CD4-positive, alpha-beta memory T cell (primary cell): ENCODE measurements at regions of chr6 and their contacts with region 1.

Region 1: DNA sequence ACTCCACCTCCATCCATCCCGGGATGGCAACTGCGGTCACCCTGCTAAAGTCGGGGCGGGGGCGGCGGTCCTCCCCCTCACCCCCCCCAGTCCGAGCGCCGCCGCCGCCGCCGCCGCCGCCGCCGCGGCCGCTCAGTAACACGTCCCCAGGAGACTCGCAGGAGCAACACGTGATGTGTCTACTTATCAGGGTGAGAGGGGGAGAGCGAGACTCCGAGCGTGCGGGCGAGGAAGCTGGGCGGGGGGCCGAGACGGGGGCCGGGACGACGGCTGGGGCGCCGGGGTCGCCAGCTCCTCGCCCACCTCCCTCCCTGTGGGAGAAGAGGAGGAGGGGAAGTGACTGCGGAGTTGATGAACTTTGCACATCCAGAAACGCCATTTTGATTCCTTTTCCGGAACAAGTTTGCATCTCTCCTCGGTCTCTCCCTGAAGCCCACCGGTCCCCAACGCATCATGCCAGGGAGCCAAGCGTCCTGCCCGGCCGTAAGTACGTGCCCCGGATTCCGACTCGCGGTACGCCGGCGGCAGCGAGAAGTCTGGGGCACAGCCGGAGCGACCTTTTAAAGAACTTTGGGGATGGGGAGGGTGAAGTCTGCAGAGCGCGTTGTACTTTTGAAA is at the start of gene RREB1:
- DNase-seq: peak; percentile 54 to 77 (median 64)
- H3K4me3 ChIP-seq: peak within 1 kb of the TSS; percentile 82 to 99
- H3K4me3 Mint-ChIP-seq: peak within 1 kb of the TSS; percentile 94 to 97 (median 96)
- H3K27ac ChIP-seq: peak within 1 kb of the TSS; percentile 74
- H3K27ac Mint-ChIP-seq: peak within 1 kb of the TSS; percentile 94 to 96 (median 95)
- H3K4me1 ChIP-seq: peaks cover 36% of the 10 kb centered on the region
- H3K4me1 Mint-ChIP-seq: peaks cover 30 to 44% (median 36%) of the 10 kb centered on the region in 4 donors
- H3K27me3 ChIP-seq: no peaks in the 10 kb centered on the region
- H3K27me3 Mint-ChIP-seq: no peaks in the 10 kb centered on the region
- total RNA-seq, gene RREB1: 43.0 to 43.4 TPM

Region 2: DNA sequence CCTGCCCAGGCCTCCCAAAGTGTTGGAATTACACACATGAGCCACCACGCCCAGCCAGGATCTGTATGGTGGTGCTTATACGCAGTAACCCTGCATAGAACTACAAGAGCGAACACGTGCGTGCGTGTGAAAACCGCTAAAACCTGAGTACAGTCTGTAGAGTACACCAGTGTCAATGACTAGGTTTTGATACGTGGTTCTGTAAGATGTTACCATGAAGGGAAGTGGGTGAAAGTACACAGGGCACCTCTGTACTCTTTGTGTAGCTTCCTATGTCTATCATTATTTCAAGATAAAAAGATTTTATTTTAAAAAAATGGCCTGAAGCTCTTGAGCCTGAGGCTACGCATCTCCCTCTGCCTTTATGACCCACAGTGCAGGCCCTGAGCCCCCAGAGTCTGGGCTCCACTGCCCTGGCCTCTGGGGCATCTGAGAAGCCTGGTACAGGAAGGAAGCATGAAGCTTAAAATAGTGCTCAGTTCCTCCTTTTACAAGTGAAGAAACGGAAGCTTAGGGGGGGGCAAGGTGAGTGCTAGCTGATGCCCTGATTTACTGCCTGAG is 497.6 kb before region 1 on chr6:
- CTCF ChIA-PET with region 1: no interaction called
- POLR2A ChIA-PET with region 1: no interaction called
- intact Hi-C with region 1: loop called (anchors 10 kb)
- DNase-seq: peak; percentile 61 to 72 (median 64)
- H3K4me3 ChIP-seq: no peak overlapping the region
- H3K4me3 Mint-ChIP-seq: peak overlapping the region in 7 of 8 donors; percentile 53 to 73 (median 61)
- H3K27ac ChIP-seq: peak overlapping the region; percentile 15
- H3K27ac Mint-ChIP-seq: peak overlapping the region; percentile 81 to 98 (median 95)
- H3K4me1 ChIP-seq: peaks cover 67% of the 10 kb centered on the region
- H3K4me1 Mint-ChIP-seq: peaks cover 42 to 74% (median 57%) of the 10 kb centered on the region in 4 donors
- H3K27me3 ChIP-seq: no peaks in the 10 kb centered on the region
- H3K27me3 Mint-ChIP-seq: no peaks in the 10 kb centered on the region

Region 3: DNA sequence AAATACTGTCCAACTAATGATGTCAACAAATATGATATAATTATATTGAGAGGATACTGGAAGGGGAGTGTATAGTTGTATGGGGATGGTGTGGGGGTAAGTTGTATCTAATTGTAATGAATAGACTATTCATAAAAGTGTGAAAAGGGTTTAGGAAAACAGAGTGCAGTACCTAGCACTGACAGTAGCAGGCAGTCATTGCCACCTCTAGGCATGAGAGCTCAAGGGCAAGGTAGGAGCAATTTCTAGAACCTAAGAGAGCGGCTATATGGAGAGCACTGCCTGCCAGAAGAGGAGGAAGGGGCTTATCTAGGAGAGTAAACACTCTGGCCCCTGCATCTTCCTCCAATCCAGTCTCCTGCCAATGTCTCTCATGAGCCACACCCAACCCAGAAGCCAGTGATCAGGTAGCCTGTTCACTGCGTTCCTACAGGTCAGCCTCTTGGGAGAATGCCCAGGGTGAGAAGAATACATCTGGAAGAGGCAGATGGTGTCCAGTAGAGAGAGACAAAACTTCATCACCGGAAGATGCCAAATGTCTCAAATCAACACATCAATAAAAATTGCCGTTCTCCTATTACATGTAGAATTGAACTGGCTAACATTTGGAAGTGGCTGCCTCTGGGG is 319.2 kb before region 1 on chr6:
- CTCF ChIA-PET with region 1: no interaction called
- POLR2A ChIA-PET with region 1: no interaction called
- intact Hi-C with region 1: no loop called
- DNase-seq: no peak
- H3K4me3 ChIP-seq: no peak overlapping the region
- H3K4me3 Mint-ChIP-seq: no peak overlapping the region
- H3K27ac ChIP-seq: no peak overlapping the region
- H3K27ac Mint-ChIP-seq: no peak overlapping the region
- H3K4me1 ChIP-seq: no peaks in the 10 kb centered on the region
- H3K4me1 Mint-ChIP-seq: peaks cover 0 to 2% (median 0%) of the 10 kb centered on the region in 4 donors
- H3K27me3 ChIP-seq: no peaks in the 10 kb centered on the region
- H3K27me3 Mint-ChIP-seq: no peaks in the 10 kb centered on the region

Region 4: GRCh38 chr6:7073821-7074525 is 33.7 kb before region 1 on chr6:
- CTCF ChIA-PET with region 1: no interaction called
- POLR2A ChIA-PET with region 1: no interaction called
- intact Hi-C with region 1: loop called (anchors 5 kb)
- DNase-seq: peak; percentile 43 to 63 (median 57)
- H3K4me3 ChIP-seq: no peak overlapping the region
- H3K4me3 Mint-ChIP-seq: peak overlapping the region in 7 of 8 donors; percentile 53 to 81 (median 72)
- H3K27ac ChIP-seq: no peak overlapping the region
- H3K27ac Mint-ChIP-seq: peak overlapping the region; percentile 68 to 94 (median 83)
- H3K4me1 ChIP-seq: peaks cover 5% of the 10 kb centered on the region
- H3K4me1 Mint-ChIP-seq: peaks cover 4 to 12% (median 10%) of the 10 kb centered on the region in 4 donors
- H3K27me3 ChIP-seq: no peaks in the 10 kb centered on the region
- H3K27me3 Mint-ChIP-seq: peaks cover 0 to 5% of the 10 kb centered on the region in 2 donors

Region 5: DNA sequence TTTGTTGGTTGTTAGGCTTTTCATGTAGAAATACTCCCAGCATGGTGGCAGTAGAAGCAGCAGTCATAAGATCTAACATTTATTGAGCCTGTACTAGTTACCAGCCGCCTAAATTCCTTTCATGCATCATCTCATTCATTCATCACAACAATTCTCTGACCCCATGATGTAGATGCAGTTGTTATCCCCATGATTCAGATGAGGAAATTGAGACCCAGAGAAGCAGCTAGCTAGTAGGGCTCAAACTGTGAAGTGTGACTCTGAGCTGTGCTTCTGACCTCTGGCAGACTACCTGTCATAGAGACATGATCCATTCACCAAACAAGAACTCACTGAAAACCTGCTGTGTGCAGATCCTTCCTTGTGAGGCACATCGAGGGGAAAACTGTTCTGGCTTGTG is 16.9 kb after region 1 on chr6:
- CTCF ChIA-PET with region 1: interaction called, 4 read pairs
- POLR2A ChIA-PET with region 1: interaction called, 8 read pairs
- intact Hi-C with region 1: loop called (anchors 2 kb)
- DNase-seq: no peak
- H3K4me3 ChIP-seq: no peak overlapping the region
- H3K4me3 Mint-ChIP-seq: peak overlapping the region in 1 of 8 donors; percentile 11
- H3K27ac ChIP-seq: no peak overlapping the region
- H3K27ac Mint-ChIP-seq: peak overlapping the region in 3 of 7 donors; percentile 3 to 77 (median 10)
- H3K4me1 ChIP-seq: peaks cover 40% of the 10 kb centered on the region
- H3K4me1 Mint-ChIP-seq: peaks cover 45 to 80% (median 63%) of the 10 kb centered on the region in 4 donors
- H3K27me3 ChIP-seq: no peaks in the 10 kb centered on the region
- H3K27me3 Mint-ChIP-seq: no peaks in the 10 kb centered on the region

Region 6: DNA sequence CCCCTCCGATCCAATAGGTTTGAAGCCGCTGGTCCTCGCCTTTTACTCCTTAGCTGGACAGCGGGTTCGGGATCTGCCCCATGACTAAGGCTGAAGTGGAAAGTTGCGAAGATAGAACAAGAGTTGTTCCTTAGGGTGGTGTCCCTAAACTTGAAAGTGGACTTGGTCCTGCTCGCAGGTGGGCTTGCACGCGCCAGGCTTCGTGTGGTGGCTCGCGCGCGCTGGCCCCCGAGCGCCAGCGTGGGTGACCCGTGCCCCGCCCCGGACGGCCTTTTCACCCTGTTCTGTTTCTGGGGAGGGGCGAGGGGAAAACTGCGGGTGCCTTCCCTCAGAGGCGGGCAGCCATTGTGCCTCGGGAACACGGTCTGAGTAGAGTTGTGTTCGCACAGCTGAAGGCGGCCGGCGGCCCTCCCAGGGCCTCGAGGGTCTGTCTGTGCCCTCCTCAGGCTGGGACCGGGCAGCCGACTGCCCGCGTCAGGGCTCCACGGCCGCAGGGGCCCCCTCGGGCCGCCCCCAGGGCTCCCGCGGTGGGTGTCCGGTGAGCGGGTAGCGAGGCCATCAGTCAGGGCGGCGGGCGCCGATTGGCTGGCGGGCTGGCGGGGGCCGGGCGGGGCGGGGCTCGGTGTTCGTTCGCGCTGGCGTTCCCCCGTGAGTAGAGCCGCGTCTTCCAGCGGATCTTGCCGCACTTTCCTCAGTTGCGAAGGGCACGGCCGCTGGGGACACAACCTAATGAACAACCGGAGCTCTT is 33.1 kb after region 1 on chr6:
- CTCF ChIA-PET with region 1: interaction called, 6 read pairs
- POLR2A ChIA-PET with region 1: interaction called, 34 read pairs
- intact Hi-C with region 1: loop called (anchors 1 kb)
- DNase-seq: peak; percentile 75 to 81 (median 75)
- H3K4me3 ChIP-seq: peak overlapping the region; percentile 44 to 65
- H3K4me3 Mint-ChIP-seq: peak overlapping the region; percentile 84 to 90 (median 88)
- H3K27ac ChIP-seq: peak overlapping the region; percentile 65
- H3K27ac Mint-ChIP-seq: peak overlapping the region; percentile 78 to 94 (median 87)
- H3K4me1 ChIP-seq: peaks cover 78% of the 10 kb centered on the region
- H3K4me1 Mint-ChIP-seq: peaks cover 47 to 77% (median 59%) of the 10 kb centered on the region in 4 donors
- H3K27me3 ChIP-seq: no peaks in the 10 kb centered on the region
- H3K27me3 Mint-ChIP-seq: no peaks in the 10 kb centered on the region